K562 (cell line): ENCODE measurements at regions of chr10 and their contacts with region 1.

Region 1: DNA sequence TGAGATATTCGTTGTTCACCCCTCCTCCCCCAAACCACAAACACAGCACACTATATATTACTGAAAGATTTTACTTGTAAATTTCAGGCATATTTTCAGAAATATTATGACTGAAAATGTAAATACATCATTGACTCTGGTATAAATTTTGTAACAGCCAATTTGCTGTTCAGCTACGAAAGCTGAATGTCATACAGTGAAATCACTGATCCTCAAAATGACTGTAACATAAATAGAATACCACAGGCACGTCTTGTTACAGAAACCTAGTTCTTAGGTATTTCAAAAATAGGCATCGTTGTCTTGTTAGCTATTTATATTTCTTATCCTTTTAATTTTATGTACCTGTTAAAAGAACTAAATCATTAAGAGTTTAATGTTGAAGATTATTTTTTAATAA is 15.1 kb downstream of the TRUB1 start:
- DNase-seq: no peak
- ATAC-seq: no peak
- H3K4me3 ChIP-seq: no peak overlapping the region
- H3K27ac ChIP-seq: no peak overlapping the region
- H3K4me1 ChIP-seq: no peaks in the 10 kb centered on the region
- H3K27me3 ChIP-seq: no peaks in the 10 kb centered on the region
- CTCF ChIP-seq: no peak
- EP300 ChIP-seq: no peak
- POLR2A ChIP-seq: no peak
- RAD21 ChIP-seq: no peak

Region 2: GRCh38 chr10:114937962-114938855 is 14.8 kb before region 1 on chr10 and contains the start of gene TRUB1:
- CTCF ChIA-PET with region 1: no interaction called
- POLR2A ChIA-PET with region 1: interaction called, 16 read pairs
- in situ Hi-C with region 1: no loop called
- intact Hi-C with region 1: no loop called
- DNase-seq: peak; percentile 76 to 91 (median 78)
- ATAC-seq: peak; percentile 100
- H3K4me3 ChIP-seq: peak within 1 kb of the TSS; percentile 89
- H3K27ac ChIP-seq: peak within 1 kb of the TSS; percentile 83
- H3K4me1 ChIP-seq: peaks cover 0 to 3% of the 10 kb centered on the region in 2 experiments; a peak in 1 of 5 replicates
- H3K27me3 ChIP-seq: no peaks in the 10 kb centered on the region
- CTCF ChIP-seq: no peak
- EP300 ChIP-seq: no peak
- POLR2A ChIP-seq: peak; percentile 86
- RAD21 ChIP-seq: no peak
- polyA plus RNA-seq, gene TRUB1: 4.6 to 7.6 TPM